ENCODE measurements at regions of chr4 and their contacts with region 1.

Region 1: GRCh38 chr4:54322818-54323417 is 93.8 kb downstream of the PDGFRA start:
- DNase-seq: no peak
- H3K4me3 ChIP-seq: no peak overlapping the region
- H3K27ac ChIP-seq: no peak overlapping the region
- H3K4me1 ChIP-seq: no peaks in the 10 kb centered on the region
- H3K27me3 ChIP-seq: no peaks in the 10 kb centered on the region
- CTCF ChIP-seq: peak in 1 of 3 experiments; percentile 56
- POLR2A ChIP-seq: no peak

Region 2: GRCh38 chr4:54233277-54233696 is 89.6 kb before region 1 on chr4:
- intact Hi-C with region 1: no loop called
- DNase-seq: peak in 1 of 2 donors; percentile 86
- H3K4me3 ChIP-seq: peak overlapping the region; percentile 56 to 65
- H3K27ac ChIP-seq: peak overlapping the region; percentile 87
- H3K4me1 ChIP-seq: peaks cover 53% of the 10 kb centered on the region
- H3K27me3 ChIP-seq: peaks cover 10% of the 10 kb centered on the region
- CTCF ChIP-seq: peak; percentile 43 to 81 (median 75)
- POLR2A ChIP-seq: no peak

Region 3: DNA sequence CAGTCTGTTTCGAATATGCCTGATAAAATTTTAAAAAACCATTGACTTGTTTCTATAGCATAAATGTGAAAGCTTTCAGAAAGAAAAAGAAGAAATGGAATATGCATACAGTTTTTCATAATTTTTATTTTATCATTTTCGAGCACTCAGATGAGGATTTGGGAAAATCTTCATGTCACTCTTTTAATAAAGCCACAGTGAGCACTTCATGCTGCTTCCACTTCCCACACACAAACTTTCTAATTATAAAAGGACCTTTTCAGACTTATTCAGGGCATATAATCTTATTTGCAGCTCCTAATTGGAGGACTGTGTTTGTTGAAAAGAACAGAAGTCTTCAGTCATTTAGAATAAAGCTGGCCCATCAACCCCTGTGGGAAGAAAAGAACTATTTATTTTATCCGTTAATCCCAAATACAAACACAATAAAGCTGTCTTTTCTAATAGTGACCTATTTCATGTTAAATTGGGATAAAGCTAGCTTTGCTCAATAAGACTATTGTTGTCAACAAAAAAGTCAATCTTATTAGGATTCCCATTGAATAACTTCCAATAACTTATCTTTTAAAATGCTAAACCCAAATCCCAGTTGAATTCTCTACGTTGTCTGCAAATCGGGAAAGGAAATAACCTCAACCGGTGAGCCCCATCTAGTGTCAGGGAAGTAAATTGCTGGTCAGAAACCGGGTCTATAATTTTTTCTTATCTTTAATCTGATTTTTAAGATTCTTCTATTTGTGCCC is 117.6 kb after region 1 on chr4:
- intact Hi-C with region 1: loop called (anchors 10 kb)
- DNase-seq: no peak
- H3K4me3 ChIP-seq: no peak overlapping the region
- H3K27ac ChIP-seq: no peak overlapping the region
- H3K4me1 ChIP-seq: no peaks in the 10 kb centered on the region
- H3K27me3 ChIP-seq: no peaks in the 10 kb centered on the region
- CTCF ChIP-seq: peak in 2 of 3 experiments; percentile 10 to 37
- POLR2A ChIP-seq: no peak

Region 4: DNA sequence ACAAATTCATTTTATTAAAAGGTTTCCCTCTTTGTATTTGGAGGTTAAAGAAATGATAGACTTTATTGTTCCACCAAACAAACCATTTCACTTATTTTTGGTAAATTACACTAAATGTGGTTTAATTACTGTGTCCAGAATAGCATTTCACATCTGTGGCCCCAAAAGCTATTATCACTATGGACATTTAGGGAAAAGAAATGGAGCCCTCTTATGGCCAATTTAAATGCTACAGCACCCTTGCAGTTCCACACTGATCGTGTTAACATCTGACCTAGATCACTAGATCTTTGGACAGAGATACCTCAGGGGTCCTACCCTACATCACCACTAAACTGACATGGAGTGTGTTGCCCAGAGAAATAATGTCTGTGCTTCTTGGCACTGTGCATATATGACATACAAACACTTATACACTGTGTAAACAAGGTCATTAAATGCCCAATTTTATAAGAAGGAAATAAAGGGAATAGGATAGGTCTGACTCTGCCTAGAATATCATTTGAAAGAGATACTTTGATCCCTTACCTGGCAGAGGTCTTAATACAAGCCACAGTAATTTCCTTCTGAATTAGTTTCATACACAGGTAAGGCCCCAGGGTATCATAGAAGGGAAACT is 638.5 kb after region 1 on chr4:
- intact Hi-C with region 1: loop called (anchors 10 kb)
- DNase-seq: no peak
- H3K4me3 ChIP-seq: no peak overlapping the region
- H3K27ac ChIP-seq: no peak overlapping the region
- H3K4me1 ChIP-seq: no peaks in the 10 kb centered on the region
- H3K27me3 ChIP-seq: no peaks in the 10 kb centered on the region
- CTCF ChIP-seq: peak in 1 of 3 experiments; percentile 43
- POLR2A ChIP-seq: no peak

Region 5: GRCh38 chr4:55050418-55050950 is 727.6 kb after region 1 on chr4:
- intact Hi-C with region 1: no loop called
- DNase-seq: no peak
- H3K4me3 ChIP-seq: no peak overlapping the region
- H3K27ac ChIP-seq: no peak overlapping the region
- H3K4me1 ChIP-seq: no peaks in the 10 kb centered on the region
- H3K27me3 ChIP-seq: no peaks in the 10 kb centered on the region
- CTCF ChIP-seq: no peak
- POLR2A ChIP-seq: no peak

Region 6: DNA sequence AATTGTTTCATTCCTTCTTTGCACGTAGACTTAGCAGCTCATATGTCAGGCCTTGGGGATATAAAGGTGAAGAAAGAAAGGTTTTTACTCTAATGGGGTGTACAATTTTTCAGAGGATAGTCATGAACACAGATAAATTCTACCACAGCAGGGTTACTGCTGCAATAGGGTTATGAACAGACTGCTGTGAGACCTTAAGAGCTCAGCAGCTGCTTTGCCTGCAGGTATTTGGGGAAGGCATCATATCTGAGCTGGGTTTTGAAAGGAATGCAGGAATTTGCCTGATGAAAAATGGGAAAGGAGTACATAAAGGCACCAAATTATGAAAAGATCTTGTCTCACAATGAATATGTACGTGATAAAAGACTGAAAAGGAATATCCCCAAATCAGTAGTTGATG is 1754.8 kb after region 1 on chr4:
- intact Hi-C with region 1: no loop called
- DNase-seq: no peak
- H3K4me3 ChIP-seq: no peak overlapping the region
- H3K27ac ChIP-seq: no peak overlapping the region
- H3K4me1 ChIP-seq: no peaks in the 10 kb centered on the region
- H3K27me3 ChIP-seq: no peaks in the 10 kb centered on the region
- CTCF ChIP-seq: no peak
- POLR2A ChIP-seq: no peak